Posterior cingulate gyrus (tissue), 11 donors: ENCODE measurements at regions of chr9 and their contacts with region 1.

Region 1: GRCh38 chr9:127943731-127944144 is 6.1 kb upstream of the DPM2 start:
- DNase-seq: peak; percentile 84 to 99 (median 90)

Region 2: DNA sequence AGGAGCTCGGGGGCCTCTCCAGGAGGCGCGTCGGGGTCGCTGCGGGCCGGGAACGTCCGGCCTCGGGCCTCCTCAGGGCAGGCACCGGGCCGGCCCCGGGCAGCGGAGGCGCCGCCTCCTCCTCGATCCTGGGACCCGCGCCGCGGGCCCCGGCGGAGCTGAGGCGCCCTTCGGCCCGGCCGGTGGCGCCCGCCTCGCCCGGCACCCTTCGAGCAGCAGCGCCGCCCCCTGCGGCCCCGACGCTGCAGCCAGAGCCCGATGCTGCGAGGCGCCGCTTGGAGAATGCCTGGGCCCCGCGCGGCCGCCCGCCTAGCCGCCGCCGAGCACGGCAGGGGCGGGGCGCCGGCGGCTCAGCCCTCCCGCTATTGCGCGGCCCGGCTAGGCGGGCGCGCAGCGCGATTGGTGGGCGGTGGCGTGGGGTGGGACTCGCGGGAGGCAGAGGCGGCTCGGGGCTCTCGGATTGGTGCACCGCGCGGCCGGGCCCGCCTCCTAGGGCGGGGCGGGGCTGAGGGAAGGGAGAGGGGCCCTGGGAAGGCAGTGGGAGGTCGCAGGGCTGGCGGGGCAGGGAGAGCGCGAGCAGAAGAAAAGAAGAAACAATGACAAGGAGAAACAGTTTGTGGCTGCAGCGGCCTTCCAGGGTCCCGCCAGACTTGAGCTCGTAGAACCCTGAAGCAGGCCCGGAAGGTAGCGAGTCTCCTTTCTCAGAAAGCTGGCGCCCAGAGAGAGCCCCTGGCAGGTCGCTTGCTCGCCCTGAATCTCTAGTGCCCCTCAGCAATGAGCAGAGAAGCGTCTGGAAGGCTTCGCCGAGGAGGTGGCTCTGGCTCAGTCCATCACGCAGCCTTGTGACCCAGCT is 37.2 kb after region 1 on chr9 and contains the start of gene EEIG1:
- intact Hi-C with region 1: loop called (anchors 2 kb)
- DNase-seq: peak; percentile 92 to 100 (median 97)

Region 3: DNA sequence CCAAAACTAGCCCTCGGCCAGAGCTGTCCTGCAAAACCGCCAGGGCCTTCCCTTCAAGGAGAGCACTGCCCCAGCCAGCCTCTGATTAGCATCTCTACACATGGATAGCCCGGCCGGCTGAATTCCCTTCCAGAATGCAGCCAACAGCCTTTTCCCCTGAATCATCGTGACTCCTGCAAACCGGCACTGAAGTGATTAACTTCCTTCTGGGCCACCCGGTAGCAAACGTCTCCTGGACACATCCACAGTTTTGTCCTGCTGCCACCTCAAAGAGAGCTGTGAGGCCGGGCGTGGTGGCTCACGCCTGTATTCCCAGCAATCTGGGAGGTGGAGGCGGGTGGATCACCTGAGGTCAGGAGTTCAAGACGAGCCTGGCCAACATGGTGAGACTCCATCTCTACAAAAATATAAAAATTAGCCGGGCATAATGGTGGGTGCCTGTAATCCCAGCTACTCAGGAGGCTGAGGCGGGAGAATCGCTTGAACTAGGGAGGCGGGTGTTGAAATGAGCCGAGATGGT is 58.1 kb after region 1 on chr9:
- intact Hi-C with region 1: no loop called
- DNase-seq: no peak

Region 4: DNA sequence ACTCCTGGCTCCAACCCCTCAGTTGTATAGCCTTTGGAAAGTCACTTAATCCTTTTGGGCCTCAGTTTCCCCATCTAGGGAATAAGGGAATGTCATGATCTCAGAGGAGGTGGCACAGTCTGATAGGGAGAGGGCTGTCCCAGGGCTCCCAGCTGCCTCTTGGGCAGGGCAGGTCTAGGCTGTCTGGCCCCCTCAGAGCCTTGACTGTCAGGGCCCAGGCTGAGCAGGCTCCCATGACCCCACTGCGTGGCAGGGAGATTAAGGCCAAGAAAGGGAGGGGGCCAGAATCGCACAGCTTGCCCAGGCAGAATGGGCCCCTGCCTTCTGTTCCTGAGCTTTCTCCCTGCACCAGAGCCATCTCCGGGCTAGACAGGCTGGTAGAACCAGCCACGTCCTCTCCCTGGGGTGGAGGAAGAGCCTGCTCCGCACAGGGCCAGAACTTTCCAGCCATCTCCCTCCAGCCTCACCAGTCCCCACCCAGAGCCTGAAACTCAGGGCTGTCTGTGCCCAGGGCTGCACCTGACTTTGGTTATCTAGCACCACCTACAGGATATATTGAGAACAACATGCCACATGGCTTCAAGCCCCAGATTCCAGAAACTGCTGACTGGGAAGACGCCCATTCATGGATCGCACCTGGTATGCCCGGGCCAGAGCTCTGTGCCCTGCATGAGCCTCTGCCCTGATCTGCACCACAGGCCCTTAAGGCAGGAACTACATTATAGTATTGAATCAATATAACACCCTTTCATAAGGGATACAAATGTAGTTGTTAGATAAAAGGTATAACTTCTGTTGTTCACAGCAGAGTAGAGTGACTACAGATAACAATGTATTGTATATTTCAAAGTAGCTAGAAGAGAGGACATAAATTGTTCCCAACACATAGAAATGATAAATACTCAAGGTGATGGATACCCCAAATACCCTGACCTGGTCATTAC is 91.4 kb after region 1 on chr9:
- intact Hi-C with region 1: loop called (anchors 1 kb)
- DNase-seq: peak in 9 of 10 donors; percentile 20 to 94 (median 63)

Region 5: GRCh38 chr9:128094166-128094967 is 150.6 kb after region 1 on chr9:
- intact Hi-C with region 1: loop called (anchors 10 kb)
- DNase-seq: peak; percentile 57 to 97 (median 86)

Region 6: DNA sequence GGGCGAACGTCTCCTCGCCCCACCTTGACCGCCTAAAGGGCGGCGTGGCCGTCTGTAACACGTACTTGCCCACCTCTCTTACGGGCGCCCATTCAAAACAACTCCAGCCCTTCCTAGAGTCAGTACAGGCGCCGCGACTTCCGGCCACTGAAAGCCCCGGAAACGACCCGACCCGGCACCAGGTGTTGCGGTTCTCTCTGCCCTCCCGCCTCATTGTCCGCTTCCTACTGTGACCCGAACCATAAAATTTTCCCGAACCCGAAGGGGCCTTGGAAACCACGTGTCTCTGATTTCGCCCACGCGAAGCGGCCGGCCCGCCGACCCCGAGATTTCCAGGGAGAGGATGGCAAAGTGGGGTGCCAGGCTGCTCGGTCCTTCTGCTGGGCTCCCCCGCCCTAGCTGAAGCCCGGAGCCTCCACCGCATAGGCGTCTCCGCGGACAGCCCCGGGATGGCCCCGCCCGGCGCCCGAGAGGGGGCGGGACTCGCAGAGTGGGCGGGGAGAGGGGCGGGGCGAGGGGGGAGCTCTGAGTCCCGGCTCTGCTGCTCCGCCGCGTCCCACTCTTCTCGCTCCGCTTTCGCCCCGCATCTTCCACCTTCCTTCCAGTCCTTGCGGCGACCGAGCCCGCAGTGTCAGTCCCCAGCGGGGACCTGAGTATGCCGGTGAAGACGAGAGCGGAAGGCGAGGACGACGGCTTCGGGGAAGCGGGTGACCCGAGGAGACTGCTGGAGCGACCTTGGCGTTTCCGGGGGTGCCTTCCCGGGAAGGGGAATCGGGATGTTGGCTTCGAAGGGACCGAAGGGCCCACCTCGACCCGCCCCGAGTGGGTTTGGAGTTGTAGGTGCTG is 184.5 kb after region 1 on chr9:
- intact Hi-C with region 1: loop called (anchors 10 kb)
- DNase-seq: peak; percentile 74 to 97 (median 85)